Mucosa of descending colon (tissue), 3 donors: ENCODE measurements at regions of chr9 and their contacts with region 1.

Region 1: GRCh38 chr9:107489687-107490605 is at the start of gene KLF4:
- DNase-seq: peak; percentile 92 to 94 (median 94)
- ATAC-seq: peak; percentile 78
- H3K4me3 ChIP-seq: peak within 1 kb of the TSS; percentile 67
- H3K4me1 ChIP-seq: peaks cover 6% of the 10 kb centered on the region
- CTCF ChIP-seq: no peak
- total RNA-seq, gene KLF4: 203 to 454 (median 438) TPM

Region 2: GRCh38 chr9:107597743-107598217 is 107.8 kb after region 1 on chr9:
- intact Hi-C with region 1: loop called in 1 of 2 experiments (anchors 10 kb)
- DNase-seq: peak; percentile 72 to 81 (median 76)
- ATAC-seq: peak; percentile 84
- H3K4me3 ChIP-seq: no peak overlapping the region
- H3K4me1 ChIP-seq: peaks cover 34% of the 10 kb centered on the region
- CTCF ChIP-seq: no peak

Region 3: GRCh38 chr9:107749787-107750444 is 260.0 kb after region 1 on chr9:
- intact Hi-C with region 1: loop called in 1 of 2 experiments (anchors 10 kb)
- DNase-seq: peak; percentile 66 to 81 (median 72)
- ATAC-seq: peak; percentile 63
- H3K4me3 ChIP-seq: no peak overlapping the region
- H3K4me1 ChIP-seq: peaks cover 20% of the 10 kb centered on the region
- CTCF ChIP-seq: no peak

Region 4: GRCh38 chr9:108272349-108272899 is 782.5 kb after region 1 on chr9:
- intact Hi-C with region 1: loop called (anchors 5 to 10 kb)
- DNase-seq: peak; percentile 60 to 73 (median 69)
- ATAC-seq: peak; percentile 75
- H3K4me3 ChIP-seq: no peak overlapping the region
- H3K4me1 ChIP-seq: peaks cover 9% of the 10 kb centered on the region
- CTCF ChIP-seq: peak; percentile 11